HEK293 (cell line): ENCODE measurements at regions of chr19 and their contacts with region 1.

Region 1: DNA sequence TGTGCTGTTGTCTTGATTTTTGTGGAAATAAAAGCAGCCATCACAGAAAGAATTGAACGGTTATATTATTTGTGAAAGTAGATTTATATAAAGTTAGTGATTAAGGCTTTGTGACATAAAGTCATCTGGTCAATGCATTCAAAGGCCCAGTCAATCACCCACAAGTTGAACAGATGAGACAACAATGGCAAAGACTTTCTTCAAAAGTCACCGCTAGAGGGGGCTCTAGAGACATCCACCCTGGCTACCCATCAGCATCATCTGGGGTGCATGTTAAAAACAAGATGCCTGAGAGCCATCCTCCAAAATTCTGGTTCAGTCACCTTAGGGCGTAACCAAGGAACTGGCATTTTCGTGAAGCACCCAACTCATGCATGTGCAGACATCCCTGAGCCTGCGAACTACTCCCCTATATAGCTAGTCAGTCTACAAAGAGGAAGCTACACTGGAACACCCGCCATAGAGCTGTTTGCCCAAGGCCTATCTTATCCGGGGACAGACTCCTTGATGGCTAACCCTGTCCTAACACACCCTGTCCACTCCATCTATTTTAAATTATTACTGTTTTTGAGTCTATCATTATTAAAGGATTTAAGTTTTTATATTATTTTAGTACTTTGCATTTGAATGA is 970.5 kb downstream of the UQCRFS1 start:
- H3K4me3 ChIP-seq: no peak overlapping the region
- H3K27ac ChIP-seq: no peak overlapping the region
- H3K4me1 ChIP-seq: no peaks in the 10 kb centered on the region
- CTCF ChIP-seq: peak; percentile 71

Region 2: DNA sequence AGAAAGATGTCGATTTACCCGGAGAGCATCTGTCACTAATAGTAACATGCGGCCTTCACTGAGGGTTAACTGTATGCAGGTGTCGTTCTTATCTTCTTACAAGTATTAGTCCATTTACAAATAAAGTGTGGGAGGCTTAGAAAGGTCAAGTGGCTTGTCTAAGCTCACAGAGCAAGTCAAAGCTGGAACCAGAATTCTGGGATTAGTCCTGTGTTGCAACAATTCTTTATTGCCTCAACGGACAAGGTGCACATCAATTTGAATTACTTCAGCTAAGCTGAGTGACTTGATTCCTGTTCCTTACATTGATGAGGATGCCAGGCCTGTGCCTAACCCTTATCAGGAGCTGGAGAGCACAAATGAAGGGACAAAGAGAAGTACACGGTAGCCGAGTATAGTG is 223.0 kb before region 1 on chr19:
- CTCF ChIA-PET with region 1: no interaction called
- POLR2A ChIA-PET with region 1: no interaction called
- H3K4me3 ChIP-seq: no peak overlapping the region
- H3K27ac ChIP-seq: no peak overlapping the region
- H3K4me1 ChIP-seq: no peaks in the 10 kb centered on the region
- CTCF ChIP-seq: no peak

Region 3: GRCh38 chr19:28217022-28217421 is 25.4 kb before region 1 on chr19:
- CTCF ChIA-PET with region 1: interaction called, 10 read pairs
- POLR2A ChIA-PET with region 1: no interaction called
- H3K4me3 ChIP-seq: no peak overlapping the region
- H3K27ac ChIP-seq: no peak overlapping the region
- H3K4me1 ChIP-seq: no peaks in the 10 kb centered on the region; the same call in 1 of the 2 replicates
- CTCF ChIP-seq: peak; percentile 77

Region 4: DNA sequence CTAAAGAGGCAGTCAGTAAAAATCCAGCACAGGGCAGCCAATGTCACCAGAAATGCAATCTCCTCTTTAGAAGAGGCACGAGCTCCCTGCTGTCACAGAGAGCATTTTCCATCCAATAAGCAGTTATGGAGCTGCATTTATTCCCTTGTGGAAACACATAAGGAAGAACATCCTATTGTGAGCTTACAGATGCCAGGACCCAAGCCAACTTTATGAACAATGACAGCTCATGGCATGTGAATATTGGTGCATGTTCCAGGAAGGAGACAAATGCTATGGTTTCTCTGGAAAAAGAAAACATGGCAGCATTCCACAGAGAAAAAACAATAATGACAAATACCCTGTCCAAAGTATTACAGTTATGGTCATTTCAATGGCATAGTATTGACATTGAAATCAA is 15.0 kb after region 1 on chr19:
- CTCF ChIA-PET with region 1: interaction called, 12 read pairs
- POLR2A ChIA-PET with region 1: no interaction called
- H3K4me3 ChIP-seq: no peak overlapping the region
- H3K27ac ChIP-seq: no peak overlapping the region
- H3K4me1 ChIP-seq: no peaks in the 10 kb centered on the region
- CTCF ChIP-seq: no peak

Region 5: GRCh38 chr19:28324275-28325060 is 82.1 kb after region 1 on chr19:
- CTCF ChIA-PET with region 1: interaction called, 210 read pairs
- POLR2A ChIA-PET with region 1: no interaction called
- H3K4me3 ChIP-seq: no peak overlapping the region
- H3K27ac ChIP-seq: no peak overlapping the region
- H3K4me1 ChIP-seq: peaks cover 9% of the 10 kb centered on the region
- CTCF ChIP-seq: peak; percentile 54